Transverse colon (tissue), 4 donors: ENCODE measurements at regions of chr5 and their contacts with region 1.

Region 1: DNA sequence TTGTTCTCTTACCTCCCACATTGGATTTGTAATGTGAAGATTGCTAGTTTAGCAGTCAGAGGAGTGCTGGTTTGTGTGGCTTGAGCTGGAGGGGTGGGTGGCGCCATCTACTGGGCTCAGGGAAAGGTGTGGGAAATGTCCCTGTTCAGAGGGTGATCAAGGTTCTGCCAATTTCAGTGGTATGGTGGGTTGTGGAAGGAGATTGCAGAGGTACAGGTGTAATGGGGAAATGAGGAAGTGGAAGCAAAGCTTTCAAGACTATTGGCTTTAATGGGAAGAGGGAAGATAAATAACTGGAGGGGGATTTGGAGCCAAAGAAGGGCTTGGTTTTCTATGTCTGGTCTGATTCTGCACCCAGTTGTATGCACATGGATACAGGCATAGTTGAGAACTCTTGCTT is 76.4 kb downstream of the OSMR start:
- DNase-seq: peak; percentile 29
- H3K4me3 ChIP-seq: no peak overlapping the region
- H3K27ac ChIP-seq: no peak overlapping the region
- H3K4me1 ChIP-seq: peaks cover 0 to 20% (median 1%) of the 10 kb centered on the region in 4 donors
- H3K27me3 ChIP-seq: no peaks in the 10 kb centered on the region
- CTCF ChIP-seq: peak; percentile 45 to 63 (median 60)
- EP300 ChIP-seq: no peak
- POLR2A ChIP-seq: no peak

Region 2: DNA sequence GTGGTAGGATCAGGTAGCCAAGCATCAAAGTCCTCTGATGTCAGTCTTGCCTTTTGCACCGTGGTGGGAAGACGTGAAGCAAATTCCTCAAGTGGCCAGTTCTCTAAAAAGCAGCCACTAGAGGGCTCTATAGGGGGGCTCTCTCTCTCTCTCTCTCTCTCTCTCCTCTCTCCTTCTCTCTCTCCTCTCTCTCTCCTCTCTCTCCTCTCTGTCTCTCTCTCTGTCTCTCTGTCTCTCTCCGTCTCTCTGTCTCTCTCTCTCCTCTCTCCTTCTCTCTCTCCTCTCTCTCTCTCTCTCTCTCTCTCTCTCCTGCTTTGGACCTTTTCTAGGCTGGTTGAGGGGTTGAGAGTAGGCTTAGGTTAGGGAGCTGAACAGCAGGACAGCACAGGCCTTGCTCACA is 90.3 kb before region 1 on chr5:
- in situ Hi-C with region 1: no loop called
- intact Hi-C with region 1: loop called (anchors 10 kb)
- DNase-seq: no peak
- H3K4me3 ChIP-seq: no peak overlapping the region
- H3K27ac ChIP-seq: no peak overlapping the region
- H3K4me1 ChIP-seq: no peaks in the 10 kb centered on the region
- H3K27me3 ChIP-seq: no peaks in the 10 kb centered on the region
- CTCF ChIP-seq: peak; percentile 11 to 95 (median 38)
- EP300 ChIP-seq: no peak
- POLR2A ChIP-seq: no peak

Region 3: GRCh38 chr5:39340506-39340905 is 418.3 kb after region 1 on chr5:
- in situ Hi-C with region 1: no loop called
- intact Hi-C with region 1: no loop called
- DNase-seq: no peak
- H3K4me3 ChIP-seq: no peak overlapping the region
- H3K27ac ChIP-seq: no peak overlapping the region
- H3K4me1 ChIP-seq: no peaks in the 10 kb centered on the region
- H3K27me3 ChIP-seq: no peaks in the 10 kb centered on the region
- CTCF ChIP-seq: no peak
- EP300 ChIP-seq: no peak
- POLR2A ChIP-seq: no peak